PC-3 (cell line): ENCODE measurements at regions of chr4 and their contacts with region 1.

Region 1: DNA sequence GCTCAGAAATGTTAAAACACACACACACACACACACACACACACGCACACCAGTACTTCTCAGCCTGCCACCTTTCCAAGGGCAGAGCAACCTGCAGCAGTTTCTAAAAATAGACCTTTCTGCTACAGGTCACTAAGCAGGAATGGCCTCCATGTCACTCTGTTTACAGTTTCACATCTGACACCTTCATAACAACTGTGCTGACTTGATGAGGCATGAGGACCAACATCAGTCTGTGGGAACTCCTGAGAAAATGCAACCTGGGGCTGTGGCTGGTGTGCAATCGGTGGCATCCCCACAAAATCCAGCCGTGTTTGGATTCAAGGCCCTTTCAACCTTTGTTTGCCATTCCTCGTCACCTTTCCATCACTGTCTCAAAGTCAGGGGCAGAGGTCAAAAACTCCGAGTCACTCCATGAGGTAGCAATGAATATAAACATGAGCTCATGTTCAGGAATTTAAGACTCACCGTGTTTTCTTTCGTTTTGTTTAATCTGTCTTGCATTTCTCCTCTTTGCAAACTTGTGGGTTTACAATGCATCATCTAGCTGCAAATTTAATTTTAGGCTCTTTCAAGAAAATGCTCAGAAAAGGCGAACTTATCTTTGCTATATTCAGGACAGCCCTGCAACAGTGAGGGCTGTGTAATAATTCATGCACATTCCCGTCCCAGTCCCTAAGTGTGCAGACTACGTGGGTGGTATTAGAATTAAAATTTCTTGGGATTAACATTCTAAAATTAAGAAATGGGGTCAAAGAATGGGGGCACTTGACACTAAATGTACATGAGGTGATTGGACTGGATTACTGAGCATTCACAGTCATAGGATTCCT is 135.3 kb downstream of the SHROOM3 start:
- DNase-seq: peak; percentile 86
- ATAC-seq: peak; percentile 85
- H3K4me3 ChIP-seq: peak overlapping the region; percentile 35
- H3K27ac ChIP-seq: peak overlapping the region; percentile 79
- H3K4me1 ChIP-seq: peaks cover 26% of the 10 kb centered on the region
- H3K27me3 ChIP-seq: no peaks in the 10 kb centered on the region
- CTCF ChIP-seq: no peak

Region 2: GRCh38 chr4:76550966-76551780 is 19.2 kb before region 1 on chr4:
- CTCF ChIA-PET with region 1: interaction called, 3 read pairs
- POLR2A ChIA-PET with region 1: no interaction called
- intact Hi-C with region 1: loop called (anchors 2 kb)
- DNase-seq: peak; percentile 70
- ATAC-seq: peak; percentile 61
- H3K4me3 ChIP-seq: no peak overlapping the region
- H3K27ac ChIP-seq: peak overlapping the region; percentile 69
- H3K4me1 ChIP-seq: peaks cover 23% of the 10 kb centered on the region
- H3K27me3 ChIP-seq: no peaks in the 10 kb centered on the region
- CTCF ChIP-seq: no peak